ENCODE measurements at regions of chr2 and their contacts with region 1.

Region 1: DNA sequence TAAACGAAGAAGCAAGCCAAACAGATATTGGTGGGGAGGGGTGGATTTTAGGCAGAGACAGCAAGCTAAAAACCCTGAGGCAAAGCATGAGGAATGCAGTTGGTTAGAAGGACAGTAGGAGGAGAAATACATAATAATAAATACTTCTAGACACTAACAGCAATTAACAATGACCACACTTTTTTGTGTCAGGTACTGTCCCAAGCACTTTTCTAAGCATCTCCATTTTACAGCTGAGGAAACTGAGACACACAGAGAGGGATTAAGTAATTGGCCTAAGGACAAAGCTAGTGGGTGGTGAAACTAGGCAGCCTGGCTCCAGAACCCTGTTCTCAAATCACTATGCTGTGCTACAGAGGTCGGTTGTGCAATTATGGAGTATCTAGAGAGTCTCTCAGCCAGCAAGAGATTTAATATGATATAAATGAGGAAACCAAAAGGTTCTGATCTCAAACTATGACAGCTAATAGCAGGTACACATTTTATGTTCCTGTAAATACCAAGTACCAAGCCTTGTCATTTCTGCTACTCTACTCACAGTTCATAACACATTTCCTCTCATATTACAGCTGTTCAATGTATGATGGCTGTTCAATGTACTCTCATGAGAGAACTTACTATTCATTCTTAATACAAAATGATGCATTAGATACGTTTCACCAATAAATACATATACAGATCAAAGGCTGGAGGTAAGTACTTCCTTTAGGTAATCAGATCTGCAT is 5.3 kb downstream of the MAP4K3 start:
- DNase-seq: peak; percentile 43
- ATAC-seq: 0 out of 2 replicates have a peak, but pooled peaks have one; percentile 7
- H3K4me3 ChIP-seq: 0 out of 2 replicates have a peak overlapping the region, but pooled peaks have one; percentile 2
- H3K27ac ChIP-seq: peak overlapping the region; percentile 3; the same call in 1 of the 2 replicates
- H3K4me1 ChIP-seq: peaks cover 59% of the 10 kb centered on the region
- H3K27me3 ChIP-seq: no peaks in the 10 kb centered on the region
- CTCF ChIP-seq: no peak

Region 2: DNA sequence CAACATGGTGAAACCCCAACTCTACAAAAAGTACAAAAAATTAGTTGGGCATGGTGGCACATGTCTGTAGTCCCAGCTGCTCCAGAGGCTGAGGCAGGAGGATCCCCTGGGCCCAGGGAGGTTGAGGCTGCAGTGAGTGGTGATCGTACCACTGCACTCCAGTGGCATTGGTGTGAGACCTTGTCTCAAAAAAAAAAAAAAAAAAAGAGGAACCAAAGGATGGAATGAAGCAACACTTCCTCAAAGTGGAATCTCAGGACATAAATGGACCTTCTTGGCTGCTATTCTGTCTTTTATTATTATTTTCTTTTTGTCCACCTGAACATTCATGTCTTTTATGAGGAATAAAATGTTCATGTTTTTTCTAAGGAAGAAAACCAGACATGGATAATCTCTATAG is 640.0 kb before region 1 on chr2:
- CTCF ChIA-PET with region 1: no interaction called
- POLR2A ChIA-PET with region 1: no interaction called
- intact Hi-C with region 1: no loop called
- DNase-seq: no peak
- ATAC-seq: no peak
- H3K4me3 ChIP-seq: no peak overlapping the region
- H3K27ac ChIP-seq: no peak overlapping the region
- H3K4me1 ChIP-seq: no peaks in the 10 kb centered on the region
- H3K27me3 ChIP-seq: no peaks in the 10 kb centered on the region
- CTCF ChIP-seq: no peak

Region 3: DNA sequence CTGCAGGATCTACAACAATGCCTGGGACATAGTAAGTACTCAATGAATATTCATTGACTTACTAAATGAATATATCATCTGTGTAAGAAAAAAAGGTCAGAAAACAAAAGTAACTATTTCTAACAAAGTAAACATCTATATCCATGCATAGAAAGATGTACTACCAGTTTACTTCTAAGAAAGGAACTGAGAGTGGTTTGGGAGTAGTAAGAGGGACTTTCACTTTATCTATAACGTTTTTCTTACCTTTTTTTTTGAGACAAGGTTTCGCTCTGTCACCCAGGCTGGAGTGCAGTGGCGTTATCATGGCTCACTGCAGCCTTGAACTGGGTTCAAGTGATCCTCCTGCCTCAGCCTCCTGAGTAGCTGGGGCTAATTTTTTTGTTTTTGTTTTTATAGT is 581.7 kb before region 1 on chr2:
- CTCF ChIA-PET with region 1: no interaction called
- POLR2A ChIA-PET with region 1: no interaction called
- intact Hi-C with region 1: no loop called
- DNase-seq: no peak
- ATAC-seq: no peak
- H3K4me3 ChIP-seq: no peak overlapping the region
- H3K27ac ChIP-seq: no peak overlapping the region
- H3K4me1 ChIP-seq: no peaks in the 10 kb centered on the region
- H3K27me3 ChIP-seq: no peaks in the 10 kb centered on the region
- CTCF ChIP-seq: no peak

Region 4: GRCh38 chr2:39403311-39403710 is 28.4 kb before region 1 on chr2:
- CTCF ChIA-PET with region 1: no interaction called
- POLR2A ChIA-PET with region 1: no interaction called
- intact Hi-C with region 1: loop called (anchors 5 kb)
- DNase-seq: no peak
- ATAC-seq: no peak
- H3K4me3 ChIP-seq: no peak overlapping the region
- H3K27ac ChIP-seq: no peak overlapping the region
- H3K4me1 ChIP-seq: peaks cover 41% of the 10 kb centered on the region
- H3K27me3 ChIP-seq: no peaks in the 10 kb centered on the region
- CTCF ChIP-seq: no peak

Region 5: DNA sequence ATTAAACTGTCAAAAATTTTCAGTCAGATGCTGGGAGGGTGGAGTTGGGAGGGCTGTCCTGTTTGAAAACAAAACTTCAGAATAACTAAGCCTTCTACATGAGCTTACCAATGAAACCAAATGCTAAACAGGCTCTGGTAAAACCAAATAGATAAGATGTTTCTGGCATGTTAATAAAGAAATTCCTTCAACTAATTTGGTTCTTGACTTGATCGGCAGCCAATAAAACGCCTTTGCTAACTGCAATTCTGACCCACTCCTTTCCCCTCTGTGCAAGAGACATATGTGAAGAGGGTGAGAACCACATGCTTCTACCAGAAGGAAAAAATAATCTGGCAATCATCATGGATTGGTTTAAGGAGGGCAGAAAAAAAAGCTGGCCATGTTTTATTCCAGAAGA is 15.6 kb before region 1 on chr2:
- CTCF ChIA-PET with region 1: interaction called, 3 read pairs
- POLR2A ChIA-PET with region 1: no interaction called
- intact Hi-C with region 1: loop called (anchors 2 kb)
- DNase-seq: no peak
- ATAC-seq: no peak
- H3K4me3 ChIP-seq: no peak overlapping the region
- H3K27ac ChIP-seq: no peak overlapping the region
- H3K4me1 ChIP-seq: peaks cover 23% of the 10 kb centered on the region
- H3K27me3 ChIP-seq: no peaks in the 10 kb centered on the region
- CTCF ChIP-seq: no peak

Region 6: DNA sequence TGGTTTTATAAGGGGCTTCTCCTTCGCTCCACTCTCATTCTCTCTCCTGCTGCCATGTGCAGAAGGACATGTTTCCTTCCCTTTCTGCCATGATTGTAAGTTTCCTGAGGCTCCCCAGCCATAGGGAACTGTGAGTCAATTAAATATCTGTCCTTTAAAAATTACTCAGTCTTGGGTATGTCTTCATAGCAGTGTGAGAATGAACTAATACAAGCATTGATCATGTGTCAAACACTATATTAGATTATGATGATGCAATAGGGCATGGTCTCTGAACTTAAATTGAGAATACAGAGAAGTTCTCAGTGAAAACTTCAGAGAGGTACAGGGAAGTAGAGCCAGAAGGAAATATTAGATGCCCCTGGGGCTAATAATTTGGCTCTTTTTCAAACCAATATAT is 11.3 kb after region 1 on chr2:
- CTCF ChIA-PET with region 1: no interaction called
- POLR2A ChIA-PET with region 1: no interaction called
- intact Hi-C with region 1: no loop called
- DNase-seq: no peak
- ATAC-seq: no peak
- H3K4me3 ChIP-seq: no peak overlapping the region
- H3K27ac ChIP-seq: no peak overlapping the region
- H3K4me1 ChIP-seq: peaks cover 52% of the 10 kb centered on the region
- H3K27me3 ChIP-seq: no peaks in the 10 kb centered on the region
- CTCF ChIP-seq: no peak